OCI-LY7 (cell line): ENCODE measurements at regions of chr6 and their contacts with region 1.

Region 1: DNA sequence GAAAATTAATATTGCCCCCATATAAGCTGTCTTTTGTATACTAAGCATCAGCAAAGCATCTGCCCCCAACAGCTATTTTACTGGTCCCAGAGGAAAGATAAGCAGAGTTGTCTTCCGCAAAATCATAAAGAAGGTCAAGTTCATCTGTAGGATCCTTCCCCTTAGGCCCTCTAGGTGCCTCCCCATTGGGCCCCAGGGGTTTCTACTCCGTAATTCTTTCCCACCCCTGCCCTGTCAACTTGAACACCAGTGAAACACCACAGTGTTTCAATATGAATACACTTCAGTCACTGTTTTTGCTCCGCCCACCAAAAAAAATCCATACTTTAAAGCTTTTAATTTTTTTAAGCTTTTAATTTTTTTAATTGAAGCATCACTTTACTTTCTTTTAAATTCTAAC is 159.2 kb downstream of the ATXN1 start:
- DNase-seq: no peak
- H3K4me3 ChIP-seq: no peak overlapping the region
- H3K27ac ChIP-seq: no peak overlapping the region
- H3K4me1 ChIP-seq: no peaks in the 10 kb centered on the region
- CTCF ChIP-seq: no peak

Region 2: GRCh38 chr6:16450285-16450684 is 151.8 kb before region 1 on chr6:
- CTCF ChIA-PET with region 1: no interaction called
- POLR2A ChIA-PET with region 1: no interaction called
- intact Hi-C with region 1: no loop called
- DNase-seq: no peak
- H3K4me3 ChIP-seq: no peak overlapping the region
- H3K27ac ChIP-seq: no peak overlapping the region
- H3K4me1 ChIP-seq: no peaks in the 10 kb centered on the region
- CTCF ChIP-seq: no peak

Region 3: DNA sequence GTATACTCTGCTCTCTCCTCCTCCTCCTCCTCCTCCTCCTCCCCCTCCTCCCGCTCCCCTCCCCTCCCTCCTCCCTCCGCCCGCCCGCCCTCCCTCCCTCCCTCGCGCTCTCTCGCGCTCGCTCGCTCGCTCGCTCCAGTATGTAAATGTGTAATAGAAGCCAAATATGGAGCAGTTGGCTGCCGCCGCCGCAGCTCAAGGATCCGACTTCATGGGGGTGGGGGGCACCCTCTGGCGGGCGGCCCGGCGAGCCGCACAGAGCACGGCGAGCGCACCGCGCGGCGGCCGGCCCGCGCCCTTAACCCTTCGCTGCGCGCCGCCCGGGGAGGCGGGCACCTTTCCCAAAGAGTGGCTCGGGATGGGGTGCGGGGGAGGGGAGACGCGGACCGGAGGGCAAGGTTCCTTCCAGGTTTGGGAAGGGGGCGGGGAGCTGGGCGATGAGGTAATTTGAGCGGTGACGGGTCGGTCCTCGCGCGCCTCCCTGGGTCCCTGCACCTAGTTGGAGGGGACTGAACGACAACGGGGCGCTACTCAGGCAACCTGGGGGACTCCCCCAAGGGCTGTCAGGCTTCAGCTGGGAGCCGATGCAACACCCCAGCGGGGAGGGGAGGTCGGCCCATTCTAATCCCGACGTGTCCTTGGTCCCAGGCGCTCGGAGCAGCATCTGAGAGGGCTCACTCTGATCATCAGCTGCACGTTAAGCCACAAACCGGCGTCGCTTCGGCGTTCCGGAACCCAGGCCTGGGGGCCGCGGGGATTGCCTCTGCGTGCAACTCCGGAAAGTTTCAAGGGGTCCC is 159.6 kb after region 1 on chr6:
- CTCF ChIA-PET with region 1: no interaction called
- POLR2A ChIA-PET with region 1: no interaction called
- intact Hi-C with region 1: loop called (anchors 10 kb)
- DNase-seq: no peak
- H3K4me3 ChIP-seq: no peak overlapping the region
- H3K27ac ChIP-seq: no peak overlapping the region
- H3K4me1 ChIP-seq: no peaks in the 10 kb centered on the region
- CTCF ChIP-seq: no peak